ENCODE measurements at regions of chr7 and their contacts with region 1.

Region 1: GRCh38 chr7:30164567-30164966 is 29.8 kb downstream of the MTURN start:
- DNase-seq: peak in 1 of 2 donors; percentile 51
- ATAC-seq: peak in 2 of 3 donors; percentile 14 to 25
- H3K4me3 ChIP-seq: no peak overlapping the region
- H3K4me3 Mint-ChIP-seq: peak overlapping the region; percentile 74
- H3K27ac ChIP-seq: no peak overlapping the region
- H3K27ac Mint-ChIP-seq: peak overlapping the region; percentile 87 to 89
- H3K4me1 ChIP-seq: peaks cover 32% of the 10 kb centered on the region
- H3K4me1 Mint-ChIP-seq: peaks cover 40 to 48% of the 10 kb centered on the region in 2 donors
- H3K27me3 ChIP-seq: no peaks in the 10 kb centered on the region
- H3K27me3 Mint-ChIP-seq: no peaks in the 10 kb centered on the region
- CTCF ChIP-seq: peak; percentile 67

Region 2: GRCh38 chr7:30143748-30144251 is 20.8 kb before region 1 on chr7:
- intact Hi-C with region 1: no loop called
- DNase-seq: no peak
- ATAC-seq: no peak
- H3K4me3 ChIP-seq: no peak overlapping the region
- H3K4me3 Mint-ChIP-seq: no peak overlapping the region
- H3K27ac ChIP-seq: no peak overlapping the region
- H3K27ac Mint-ChIP-seq: no peak overlapping the region
- H3K4me1 ChIP-seq: peaks cover 2% of the 10 kb centered on the region
- H3K4me1 Mint-ChIP-seq: no peaks in the 10 kb centered on the region
- H3K27me3 ChIP-seq: no peaks in the 10 kb centered on the region
- H3K27me3 Mint-ChIP-seq: peaks cover 0 to 2% of the 10 kb centered on the region in 2 donors
- CTCF ChIP-seq: no peak

Region 3: GRCh38 chr7:30176463-30177109 is 12.0 kb after region 1 on chr7:
- intact Hi-C with region 1: loop called (anchors 2 kb)
- DNase-seq: no peak
- ATAC-seq: peak; percentile 61 to 69 (median 65)
- H3K4me3 ChIP-seq: no peak overlapping the region
- H3K4me3 Mint-ChIP-seq: peak overlapping the region; percentile 58
- H3K27ac ChIP-seq: peak overlapping the region; percentile 28
- H3K27ac Mint-ChIP-seq: peak overlapping the region; percentile 52 to 70
- H3K4me1 ChIP-seq: peaks cover 31% of the 10 kb centered on the region
- H3K4me1 Mint-ChIP-seq: peaks cover 36 to 52% of the 10 kb centered on the region in 2 donors
- H3K27me3 ChIP-seq: no peaks in the 10 kb centered on the region
- H3K27me3 Mint-ChIP-seq: peaks cover 0 to 2% of the 10 kb centered on the region in 2 donors
- CTCF ChIP-seq: no peak

Region 4: DNA sequence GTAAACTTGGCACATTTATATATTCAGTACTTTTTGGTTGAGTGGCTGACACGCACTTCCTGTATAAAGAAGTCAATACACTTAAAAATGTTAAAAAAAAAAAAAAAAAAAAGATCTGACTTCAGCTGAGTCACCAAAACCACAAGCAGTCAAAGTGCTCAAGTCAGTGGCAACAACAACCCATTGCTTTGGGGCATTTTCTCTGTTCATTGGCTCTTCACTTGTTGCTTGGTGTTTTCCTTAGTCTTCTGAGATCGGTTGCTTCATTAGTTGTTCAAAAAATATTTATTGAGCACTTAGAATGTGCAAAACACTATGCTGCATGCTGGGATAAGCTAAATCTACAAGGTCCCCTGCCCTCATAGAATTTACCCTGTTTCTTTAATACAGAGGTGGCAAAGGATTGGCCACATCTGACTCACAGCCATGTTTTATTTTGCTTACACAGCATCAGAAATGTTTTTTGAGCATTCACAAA is 183.6 kb after region 1 on chr7:
- intact Hi-C with region 1: loop called (anchors 5 kb)
- DNase-seq: peak; percentile 30 to 89
- ATAC-seq: peak; percentile 82 to 90 (median 89)
- H3K4me3 ChIP-seq: no peak overlapping the region
- H3K4me3 Mint-ChIP-seq: peak overlapping the region; percentile 83
- H3K27ac ChIP-seq: peak overlapping the region; percentile 74
- H3K27ac Mint-ChIP-seq: peak overlapping the region; percentile 96 to 97
- H3K4me1 ChIP-seq: peaks cover 11% of the 10 kb centered on the region
- H3K4me1 Mint-ChIP-seq: peaks cover 50 to 64% of the 10 kb centered on the region in 2 donors
- H3K27me3 ChIP-seq: no peaks in the 10 kb centered on the region
- H3K27me3 Mint-ChIP-seq: no peaks in the 10 kb centered on the region
- CTCF ChIP-seq: no peak

Region 5: DNA sequence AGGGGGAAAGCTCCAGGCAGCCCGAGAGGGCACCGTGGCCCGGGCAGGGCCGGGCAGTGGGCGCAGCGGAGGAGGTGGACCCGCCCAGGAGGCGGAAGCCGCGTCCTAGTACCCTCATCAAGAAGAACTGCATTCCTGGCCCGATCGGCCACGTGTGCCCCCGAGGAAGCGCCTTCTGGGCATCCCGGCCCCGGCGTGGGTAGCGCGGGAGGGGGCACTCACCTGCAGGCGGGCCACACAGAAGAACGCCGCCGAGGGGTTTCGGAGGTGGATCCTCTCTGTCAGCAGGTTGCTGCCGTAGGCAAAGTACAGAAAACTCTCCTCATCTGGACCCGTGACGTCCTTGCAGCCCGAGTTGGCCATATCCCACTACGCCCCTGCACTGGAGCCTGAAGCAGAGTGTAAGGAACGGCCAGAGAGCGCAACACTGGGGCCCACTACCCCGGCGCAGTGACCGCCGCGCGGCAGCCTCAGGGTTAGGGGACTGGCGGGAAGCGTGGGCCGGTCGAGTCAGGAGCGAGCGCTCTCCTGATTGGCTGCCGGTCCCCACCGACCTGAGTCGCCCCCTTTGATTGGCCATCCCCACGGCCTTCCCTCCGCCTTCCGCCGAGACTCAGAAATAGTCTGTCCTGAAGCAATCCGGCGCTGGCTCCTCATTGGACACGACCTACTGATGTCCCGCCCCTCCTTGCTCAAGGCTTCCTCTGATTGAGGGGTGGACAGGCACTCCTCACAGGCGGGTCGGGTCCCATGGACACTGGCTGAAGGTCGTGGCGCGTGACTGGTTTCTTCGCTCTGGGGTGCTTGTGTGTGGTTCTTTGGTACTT is 340.0 kb after region 1 on chr7 and contains the start of gene GGCT:
- intact Hi-C with region 1: loop called (anchors 10 kb)
- DNase-seq: peak; percentile 97 to 98
- ATAC-seq: peak; percentile 96 to 100 (median 98)
- H3K4me3 ChIP-seq: peak within 1 kb of the TSS; percentile 85
- H3K4me3 Mint-ChIP-seq: peak within 1 kb of the TSS; percentile 89
- H3K27ac ChIP-seq: peak within 1 kb of the TSS; percentile 51
- H3K27ac Mint-ChIP-seq: peak within 1 kb of the TSS; percentile 77 to 91
- H3K4me1 ChIP-seq: peaks cover 15% of the 10 kb centered on the region
- H3K4me1 Mint-ChIP-seq: peaks cover 31 to 35% of the 10 kb centered on the region in 2 donors
- H3K27me3 ChIP-seq: no peaks in the 10 kb centered on the region
- H3K27me3 Mint-ChIP-seq: no peaks in the 10 kb centered on the region
- CTCF ChIP-seq: no peak
- total RNA-seq, gene GGCT: 8.7 to 10.8 (median 9.2) TPM